ENCODE measurements at regions of chr13 and their contacts with region 1.

Region 1: GRCh38 chr13:22486490-22486889 is 694.3 kb upstream of the SGCG start:
- DNase-seq: no peak
- ATAC-seq: no peak
- H3K4me3 ChIP-seq: no peak overlapping the region
- H3K4me3 Mint-ChIP-seq: no peak overlapping the region
- H3K27ac ChIP-seq: no peak overlapping the region
- H3K27ac Mint-ChIP-seq: no peak overlapping the region
- H3K4me1 ChIP-seq: no peaks in the 10 kb centered on the region
- H3K4me1 Mint-ChIP-seq: no peaks in the 10 kb centered on the region
- H3K27me3 ChIP-seq: no peaks in the 10 kb centered on the region
- H3K27me3 Mint-ChIP-seq: no peaks in the 10 kb centered on the region

Region 2: GRCh38 chr13:22812794-22813193 is 326.3 kb after region 1 on chr13:
- CTCF ChIA-PET with region 1: no interaction called
- POLR2A ChIA-PET with region 1: interaction called in 1 of 2 experiments, 10 read pairs
- DNase-seq: no peak
- ATAC-seq: no peak
- H3K4me3 ChIP-seq: no peak overlapping the region
- H3K4me3 Mint-ChIP-seq: no peak overlapping the region
- H3K27ac ChIP-seq: no peak overlapping the region
- H3K27ac Mint-ChIP-seq: no peak overlapping the region
- H3K4me1 ChIP-seq: no peaks in the 10 kb centered on the region
- H3K4me1 Mint-ChIP-seq: peaks cover 0 to 1% (median 0%) of the 10 kb centered on the region in 3 donors
- H3K27me3 ChIP-seq: no peaks in the 10 kb centered on the region
- H3K27me3 Mint-ChIP-seq: no peaks in the 10 kb centered on the region

Region 3: GRCh38 chr13:23243066-23243465 is 756.6 kb after region 1 on chr13:
- CTCF ChIA-PET with region 1: no interaction called
- POLR2A ChIA-PET with region 1: no interaction called
- DNase-seq: no peak
- ATAC-seq: no peak
- H3K4me3 ChIP-seq: no peak overlapping the region
- H3K4me3 Mint-ChIP-seq: no peak overlapping the region
- H3K27ac ChIP-seq: no peak overlapping the region
- H3K27ac Mint-ChIP-seq: no peak overlapping the region
- H3K4me1 ChIP-seq: no peaks in the 10 kb centered on the region
- H3K4me1 Mint-ChIP-seq: no peaks in the 10 kb centered on the region
- H3K27me3 ChIP-seq: peaks cover 0 to 6% of the 10 kb centered on the region in 2 experiments
- H3K27me3 Mint-ChIP-seq: peaks cover 3 to 12% of the 10 kb centered on the region in 2 donors

Measured in T-cell (primary cell).